T-cell (primary cell): ENCODE measurements at regions of chr17 and their contacts with region 1.

Region 1: GRCh38 chr17:57255776-57256681 is at the start of gene MSI2:
- DNase-seq: peak; percentile 73 to 95 (median 88)
- ATAC-seq: peak; percentile 80 to 81 (median 80)
- H3K4me3 ChIP-seq: peak within 1 kb of the TSS; percentile 67 to 86
- H3K4me3 Mint-ChIP-seq: peak within 1 kb of the TSS; percentile 91 to 98 (median 92)
- H3K27ac ChIP-seq: peak within 1 kb of the TSS; percentile 75
- H3K27ac Mint-ChIP-seq: peak within 1 kb of the TSS; percentile 88 to 89
- H3K4me1 ChIP-seq: peaks cover 19 to 29% of the 10 kb centered on the region in 2 experiments
- H3K4me1 Mint-ChIP-seq: peaks cover 45 to 50% (median 46%) of the 10 kb centered on the region in 3 donors
- H3K27me3 ChIP-seq: no peaks in the 10 kb centered on the region
- H3K27me3 Mint-ChIP-seq: no peaks in the 10 kb centered on the region
- total RNA-seq, gene MSI2: 98.6 to 148 (median 113) TPM

Region 2: DNA sequence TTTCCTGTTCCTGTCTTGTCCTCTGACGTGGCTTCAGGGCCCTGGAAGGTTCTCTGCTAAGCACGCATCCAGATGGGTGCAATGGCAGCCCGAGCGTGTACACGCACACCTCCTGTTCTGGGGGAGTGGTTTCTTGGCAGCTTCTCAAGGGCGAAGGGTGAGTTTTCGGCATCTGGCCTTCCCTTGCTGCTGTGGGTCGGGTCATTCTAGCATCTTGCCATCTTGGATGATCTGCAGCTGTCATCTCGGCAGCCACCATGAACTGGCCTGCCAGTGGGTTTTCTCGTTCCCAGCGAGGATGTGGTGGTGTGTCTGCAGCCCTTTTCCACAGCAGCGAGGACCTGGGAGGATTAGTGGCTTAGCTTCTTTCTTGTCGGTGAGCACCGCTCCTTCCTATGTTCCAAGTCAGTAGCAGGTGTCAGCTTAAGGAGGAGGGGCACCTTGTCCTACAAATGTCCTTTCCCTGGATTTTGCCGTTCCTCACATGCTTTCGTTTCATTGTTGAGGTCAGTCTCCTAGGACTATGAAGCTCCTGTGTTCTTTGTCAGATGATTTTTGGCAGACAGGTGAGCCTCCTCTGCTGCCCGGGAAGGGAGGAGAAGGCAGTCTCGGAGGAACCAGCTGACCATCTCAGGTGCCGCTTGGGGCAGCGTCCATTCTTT is 11.0 kb after region 1 on chr17:
- CTCF ChIA-PET with region 1: interaction called, 9 to 14 read pairs
- POLR2A ChIA-PET with region 1: interaction called, 4 to 10 read pairs
- DNase-seq: peak in 1 of 35 experiments; percentile 13
- ATAC-seq: no peak
- H3K4me3 ChIP-seq: no peak overlapping the region
- H3K4me3 Mint-ChIP-seq: no peak overlapping the region
- H3K27ac ChIP-seq: no peak overlapping the region
- H3K27ac Mint-ChIP-seq: no peak overlapping the region
- H3K4me1 ChIP-seq: peaks cover 0 to 11% of the 10 kb centered on the region in 2 experiments
- H3K4me1 Mint-ChIP-seq: peaks cover 67 to 76% (median 72%) of the 10 kb centered on the region in 3 donors
- H3K27me3 ChIP-seq: no peaks in the 10 kb centered on the region
- H3K27me3 Mint-ChIP-seq: no peaks in the 10 kb centered on the region

Region 3: DNA sequence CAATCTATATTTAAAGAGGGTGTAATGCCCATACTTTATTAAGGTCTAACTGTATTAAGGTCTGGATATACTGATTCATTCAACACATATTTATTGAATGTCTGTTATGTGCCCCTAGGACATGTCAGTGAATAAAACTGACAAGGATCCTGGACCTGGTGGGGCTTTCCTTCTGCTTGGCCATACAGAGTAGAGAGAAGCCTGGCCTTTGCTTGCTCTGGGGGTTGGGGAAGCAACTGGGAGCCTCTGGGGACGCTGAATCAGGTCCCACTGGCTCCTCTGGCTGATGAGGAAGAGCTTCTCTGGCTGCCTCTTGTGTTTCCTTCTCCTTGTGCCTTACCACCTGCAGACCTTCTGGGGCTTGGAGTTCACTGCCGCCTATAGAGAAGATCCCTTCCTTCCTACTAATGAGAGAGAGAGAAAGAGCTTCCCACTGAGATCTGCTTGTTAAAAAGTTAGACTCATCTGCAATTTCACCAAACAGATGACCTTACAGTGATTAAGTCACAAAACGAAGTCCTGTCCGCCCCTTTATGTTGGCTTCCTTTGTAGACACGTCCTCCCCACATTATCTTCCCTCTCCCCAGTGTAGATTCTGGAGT is 50.0 kb after region 1 on chr17:
- CTCF ChIA-PET with region 1: interaction called, 3 to 14 read pairs
- POLR2A ChIA-PET with region 1: interaction called in 1 of 2 experiments, 5 read pairs
- DNase-seq: no peak
- ATAC-seq: no peak
- H3K4me3 ChIP-seq: no peak overlapping the region
- H3K4me3 Mint-ChIP-seq: no peak overlapping the region
- H3K27ac ChIP-seq: no peak overlapping the region
- H3K27ac Mint-ChIP-seq: peak overlapping the region in 1 of 2 donors; percentile 19
- H3K4me1 ChIP-seq: no peaks in the 10 kb centered on the region
- H3K4me1 Mint-ChIP-seq: peaks cover 29 to 52% (median 44%) of the 10 kb centered on the region in 3 donors
- H3K27me3 ChIP-seq: no peaks in the 10 kb centered on the region
- H3K27me3 Mint-ChIP-seq: no peaks in the 10 kb centered on the region